HepG2 (cell line): ENCODE measurements at regions of chr1 and their contacts with region 1.

Region 1: DNA sequence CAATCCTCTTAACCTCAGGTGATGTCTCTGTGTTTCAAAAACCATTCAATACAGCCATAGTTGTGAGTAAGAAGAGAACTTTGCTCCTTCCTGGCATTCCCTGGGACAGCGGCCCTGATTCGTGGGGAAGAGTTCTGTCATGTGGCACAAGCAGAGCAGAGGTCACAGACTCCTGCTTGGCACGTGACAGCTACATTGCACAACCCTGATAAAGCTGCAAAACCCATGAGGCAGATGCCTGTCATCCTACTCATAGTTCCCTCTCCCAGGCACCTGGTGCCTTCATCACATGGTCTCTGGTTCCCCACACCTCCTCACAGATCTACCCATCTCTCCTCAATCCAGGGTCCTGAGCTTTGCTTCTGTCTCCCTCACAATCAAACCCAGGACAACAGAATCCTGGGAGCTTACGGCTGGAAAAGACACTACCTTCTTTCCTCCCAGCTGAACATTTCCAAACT is 70.8 kb downstream of the PLPP3 start:
- DNase-seq: peak; percentile 98
- ATAC-seq: peak; percentile 91
- H3K4me3 ChIP-seq: no peak overlapping the region
- H3K27ac ChIP-seq: peak overlapping the region; percentile 93
- H3K4me1 ChIP-seq: peaks cover 89% of the 10 kb centered on the region
- H3K27me3 ChIP-seq: no peaks in the 10 kb centered on the region
- CTCF ChIP-seq: peak; percentile 20; the same call in 1 of the 2 replicates
- EP300 ChIP-seq: peak; percentile 60 to 95; a peak in 3 of 4 replicates
- POLR2A ChIP-seq: peak in 1 of 2 experiments; percentile 43; a peak in 1 of 4 replicates
- RAD21 ChIP-seq: peak; percentile 74

Region 2: DNA sequence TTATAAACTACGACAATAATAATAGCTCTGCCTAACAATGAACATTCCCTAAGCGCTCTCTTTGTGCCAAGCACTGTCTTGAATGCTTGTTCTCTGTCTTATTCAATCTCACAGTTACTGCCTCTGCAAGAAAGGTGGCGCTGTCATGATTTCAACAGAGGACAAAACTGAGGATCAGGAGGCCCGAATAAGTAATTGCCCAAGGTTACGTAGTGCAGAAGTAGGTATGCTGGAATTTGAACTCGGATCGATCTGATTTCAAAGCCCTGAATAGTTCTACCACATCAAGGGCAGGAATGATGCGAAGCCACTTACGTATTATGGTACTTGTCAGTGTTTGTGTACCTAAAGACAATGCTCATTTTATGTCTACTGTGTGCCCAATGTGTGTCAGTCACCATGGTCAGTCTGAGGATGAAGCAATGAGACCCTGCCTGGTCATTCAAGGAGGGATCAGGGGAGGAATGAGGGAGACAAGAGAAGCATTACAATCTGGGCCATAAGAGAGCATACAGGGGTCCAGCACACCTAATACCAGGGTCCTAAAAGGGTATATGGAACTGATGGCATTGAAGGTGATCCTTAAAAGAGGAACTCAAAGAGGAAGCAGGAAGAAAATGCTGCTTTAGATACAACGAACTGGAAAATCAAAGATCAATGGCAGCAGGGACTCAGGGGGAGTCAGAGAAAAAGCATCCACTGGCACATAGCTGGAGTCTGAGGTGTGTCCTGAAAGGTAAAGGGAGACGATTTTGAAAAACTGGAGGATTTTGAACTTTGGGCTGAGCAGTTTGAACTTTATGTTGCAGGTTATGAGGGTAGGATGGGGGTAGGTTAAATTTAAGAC is 318.4 kb before region 1 on chr1:
- CTCF ChIA-PET with region 1: no interaction called
- POLR2A ChIA-PET with region 1: interaction called, 6 read pairs
- in situ Hi-C with region 1: loop called (anchors 10 kb)
- intact Hi-C with region 1: loop called (anchors 1 kb)
- DNase-seq: peak; percentile 99
- ATAC-seq: peak; percentile 94
- H3K4me3 ChIP-seq: peak overlapping the region; percentile 52 to 65 (median 58); a peak in 5 of 6 replicates
- H3K27ac ChIP-seq: peak overlapping the region; percentile 91
- H3K4me1 ChIP-seq: peaks cover 47% of the 10 kb centered on the region
- H3K27me3 ChIP-seq: no peaks in the 10 kb centered on the region
- CTCF ChIP-seq: peak; percentile 86
- EP300 ChIP-seq: peak; percentile 98 to 99
- POLR2A ChIP-seq: peak in 1 of 2 experiments; percentile 94; a peak in 2 of 4 replicates
- RAD21 ChIP-seq: peak; percentile 71

Region 3: GRCh38 chr1:56235909-56236510 is 272.5 kb before region 1 on chr1:
- CTCF ChIA-PET with region 1: no interaction called
- POLR2A ChIA-PET with region 1: no interaction called
- in situ Hi-C with region 1: no loop called
- intact Hi-C with region 1: loop called (anchors 5 kb)
- DNase-seq: peak; percentile 78
- ATAC-seq: peak; percentile 91
- H3K4me3 ChIP-seq: no peak overlapping the region
- H3K27ac ChIP-seq: no peak overlapping the region
- H3K4me1 ChIP-seq: peaks cover 19% of the 10 kb centered on the region
- H3K27me3 ChIP-seq: no peaks in the 10 kb centered on the region
- CTCF ChIP-seq: peak; percentile 64
- EP300 ChIP-seq: peak in 1 of 2 experiments; percentile 25; a peak in 1 of 4 replicates
- POLR2A ChIP-seq: no peak
- RAD21 ChIP-seq: no peak

Region 4: DNA sequence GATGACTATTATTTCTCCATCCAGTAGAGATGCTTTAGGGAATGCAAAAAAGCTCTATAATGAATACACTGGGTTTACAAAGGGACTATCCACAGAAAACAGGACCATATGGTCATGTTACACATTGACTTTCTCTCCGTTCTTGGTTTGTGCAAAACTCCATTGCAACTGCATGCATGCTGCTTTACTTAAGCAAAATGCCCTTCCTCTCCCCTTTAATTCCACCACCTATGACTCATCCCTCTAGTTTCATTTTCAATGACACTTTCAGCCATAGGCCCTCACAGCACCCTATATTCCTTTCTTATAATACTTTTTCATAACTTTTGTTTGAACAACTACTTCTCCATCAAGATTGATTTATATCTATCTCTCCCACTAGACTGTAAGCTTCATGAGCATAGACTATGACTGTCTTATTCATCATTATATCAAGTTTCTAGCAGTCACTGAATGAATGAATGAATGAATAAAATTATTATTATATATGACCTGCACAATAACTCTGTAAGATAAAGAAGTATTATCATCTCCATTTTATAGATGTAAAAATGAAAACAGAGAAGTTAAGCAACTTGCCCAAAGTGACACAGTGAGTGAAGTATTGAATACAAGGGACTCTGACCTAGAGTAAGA is 178.0 kb before region 1 on chr1:
- CTCF ChIA-PET with region 1: no interaction called
- POLR2A ChIA-PET with region 1: interaction called, 5 read pairs
- in situ Hi-C with region 1: no loop called
- intact Hi-C with region 1: loop called (anchors 10 kb)
- DNase-seq: peak; percentile 47
- ATAC-seq: no peak; the same call in 2 of the 3 replicates
- H3K4me3 ChIP-seq: peak overlapping the region in 1 of 3 experiments; percentile 47; a peak in 1 of 6 replicates
- H3K27ac ChIP-seq: peak overlapping the region; percentile 85
- H3K4me1 ChIP-seq: peaks cover 39% of the 10 kb centered on the region
- H3K27me3 ChIP-seq: no peaks in the 10 kb centered on the region
- CTCF ChIP-seq: no peak
- EP300 ChIP-seq: no peak
- POLR2A ChIP-seq: no peak
- RAD21 ChIP-seq: no peak

Region 5: GRCh38 chr1:56477164-56478111 is 31.1 kb before region 1 on chr1:
- CTCF ChIA-PET with region 1: no interaction called
- POLR2A ChIA-PET with region 1: interaction called, 31 read pairs
- in situ Hi-C with region 1: no loop called
- intact Hi-C with region 1: no loop called
- DNase-seq: peak; percentile 85
- ATAC-seq: peak; percentile 90
- H3K4me3 ChIP-seq: peak overlapping the region; percentile 64 to 77 (median 68)
- H3K27ac ChIP-seq: peak overlapping the region; percentile 95
- H3K4me1 ChIP-seq: peaks cover 82% of the 10 kb centered on the region
- H3K27me3 ChIP-seq: no peaks in the 10 kb centered on the region
- CTCF ChIP-seq: no peak
- EP300 ChIP-seq: peak in 1 of 2 experiments; percentile 54; a peak in 2 of 4 replicates
- POLR2A ChIP-seq: peak; percentile 44 to 73; a peak in 2 of 4 replicates
- RAD21 ChIP-seq: no peak; the same call in none of the 2 replicates

Region 6: GRCh38 chr1:56562891-56563452 is 54.4 kb after region 1 on chr1:
- CTCF ChIA-PET with region 1: no interaction called
- POLR2A ChIA-PET with region 1: interaction called, 16 read pairs
- in situ Hi-C with region 1: no loop called
- intact Hi-C with region 1: no loop called
- DNase-seq: no peak
- ATAC-seq: no peak
- H3K4me3 ChIP-seq: peak overlapping the region in 1 of 3 experiments; percentile 8; a peak in 2 of 6 replicates
- H3K27ac ChIP-seq: peak overlapping the region; percentile 73
- H3K4me1 ChIP-seq: peaks cover 98% of the 10 kb centered on the region
- H3K27me3 ChIP-seq: no peaks in the 10 kb centered on the region
- CTCF ChIP-seq: no peak
- EP300 ChIP-seq: no peak
- POLR2A ChIP-seq: no peak
- RAD21 ChIP-seq: no peak

Region 7: GRCh38 chr1:56570924-56571372 is 62.4 kb after region 1 on chr1:
- CTCF ChIA-PET with region 1: no interaction called
- POLR2A ChIA-PET with region 1: interaction called, 64 read pairs
- in situ Hi-C with region 1: loop called (anchors 5 kb)
- intact Hi-C with region 1: no loop called
- DNase-seq: no peak
- ATAC-seq: no peak
- H3K4me3 ChIP-seq: no peak overlapping the region
- H3K27ac ChIP-seq: peak overlapping the region; percentile 15
- H3K4me1 ChIP-seq: peaks cover 98% of the 10 kb centered on the region
- H3K27me3 ChIP-seq: no peaks in the 10 kb centered on the region
- CTCF ChIP-seq: no peak
- EP300 ChIP-seq: no peak
- POLR2A ChIP-seq: no peak
- RAD21 ChIP-seq: no peak